ENCODE measurements at regions of chr11 and their contacts with region 1.

Region 1: DNA sequence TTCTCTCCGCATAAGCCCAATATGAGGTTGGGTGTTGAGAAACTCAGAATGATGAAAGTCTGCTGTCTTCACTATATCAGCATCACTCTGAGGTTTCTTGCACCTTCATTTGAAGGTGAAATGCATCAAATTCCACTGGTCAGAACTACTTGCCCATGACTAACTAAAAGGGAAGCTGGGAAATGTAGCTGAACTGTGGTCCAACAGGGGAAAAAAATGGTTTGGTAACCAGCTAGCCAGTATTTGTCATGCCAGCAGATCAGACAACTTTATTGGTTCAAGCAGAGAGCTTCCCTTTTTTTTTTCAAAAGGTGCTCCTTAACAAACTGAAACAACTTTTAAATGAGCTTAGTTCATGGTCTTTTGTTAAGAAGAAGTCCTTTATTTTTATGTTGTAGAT is 14.2 kb upstream of the PIK3C2A start:
- DNase-seq: peak; percentile 3
- ATAC-seq: no peak
- H3K4me3 ChIP-seq: no peak overlapping the region
- H3K27ac ChIP-seq: no peak overlapping the region
- H3K4me1 ChIP-seq: peaks cover 7% of the 10 kb centered on the region; the same call in 1 of the 2 replicates
- H3K27me3 ChIP-seq: no peaks in the 10 kb centered on the region
- CTCF ChIP-seq: no peak

Region 2: DNA sequence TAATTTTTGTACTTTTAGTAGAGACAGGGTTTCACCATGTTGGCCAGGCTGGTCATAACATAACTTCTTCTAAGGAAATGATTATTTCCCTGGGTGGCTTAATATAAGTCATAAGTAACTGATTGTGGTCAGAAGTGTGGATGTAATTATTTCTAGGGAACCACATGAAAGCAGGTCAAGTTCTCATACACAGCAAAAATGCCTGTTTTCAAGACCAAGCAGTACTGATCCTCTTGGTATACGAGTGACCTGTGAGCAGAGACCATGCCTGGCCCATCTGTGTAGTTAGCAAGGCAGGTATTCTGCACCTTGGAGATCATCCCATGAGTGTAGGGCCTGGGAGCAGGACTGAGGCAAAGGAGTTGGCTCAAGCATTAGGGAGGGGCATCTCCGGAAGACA is 22.1 kb after region 1 on chr11:
- CTCF ChIA-PET with region 1: interaction called, 20 read pairs
- POLR2A ChIA-PET with region 1: no interaction called
- intact Hi-C with region 1: no loop called
- DNase-seq: no peak
- ATAC-seq: no peak
- H3K4me3 ChIP-seq: no peak overlapping the region
- H3K27ac ChIP-seq: no peak overlapping the region
- H3K4me1 ChIP-seq: no peaks in the 10 kb centered on the region
- H3K27me3 ChIP-seq: no peaks in the 10 kb centered on the region
- CTCF ChIP-seq: no peak

Measured in PC-3 (cell line).